Activated naive CD4-positive, alpha-beta T cell treated with anti-CD3 and anti-CD28 coated beads for 36 hours (primary cell): ENCODE measurements at regions of chr14 and their contacts with region 1.

Region 1: DNA sequence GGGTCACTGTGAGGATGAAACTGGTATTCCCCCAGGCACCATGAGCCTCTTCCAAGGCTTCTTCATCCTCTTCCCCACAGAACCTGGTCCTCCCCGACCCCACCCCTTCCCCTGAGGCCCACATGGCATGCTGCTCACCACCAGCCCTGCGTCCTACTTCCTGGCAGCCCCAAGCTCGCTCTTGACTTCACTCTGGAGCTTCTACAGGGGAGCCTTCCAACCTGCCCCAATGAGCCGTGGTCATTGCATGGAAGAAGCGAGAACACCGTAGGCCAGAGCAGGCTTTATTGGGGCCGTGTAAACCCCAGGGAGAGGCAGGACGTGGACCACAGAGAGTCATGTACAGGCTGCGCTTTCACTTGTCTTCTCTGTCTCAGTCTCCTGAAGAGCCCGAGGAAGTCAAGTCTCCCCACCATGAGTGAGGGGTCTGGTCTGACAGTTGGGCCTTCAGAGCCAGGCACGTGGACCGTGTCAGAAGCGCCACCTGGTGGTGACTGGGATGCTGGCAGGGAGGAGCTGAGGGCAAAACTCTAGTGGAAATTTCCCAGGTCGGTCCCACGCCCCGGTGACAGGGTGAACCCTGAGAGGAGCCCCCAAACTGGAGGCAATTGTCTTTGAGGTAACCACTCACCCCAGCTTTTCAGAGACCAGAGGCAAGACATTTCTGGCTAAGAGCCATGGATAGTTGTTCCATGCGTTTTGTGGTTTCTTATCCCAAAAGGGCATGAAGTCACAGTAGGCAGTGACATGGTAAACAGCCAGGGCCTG is 17.5 kb downstream of the RPS6KL1 start:
- DNase-seq: peak; percentile 87
- H3K4me3 Mint-ChIP-seq: no peak overlapping the region
- H3K27ac Mint-ChIP-seq: no peak overlapping the region
- H3K4me1 Mint-ChIP-seq: peaks cover 5% of the 10 kb centered on the region
- H3K27me3 Mint-ChIP-seq: no peaks in the 10 kb centered on the region

Region 2: DNA sequence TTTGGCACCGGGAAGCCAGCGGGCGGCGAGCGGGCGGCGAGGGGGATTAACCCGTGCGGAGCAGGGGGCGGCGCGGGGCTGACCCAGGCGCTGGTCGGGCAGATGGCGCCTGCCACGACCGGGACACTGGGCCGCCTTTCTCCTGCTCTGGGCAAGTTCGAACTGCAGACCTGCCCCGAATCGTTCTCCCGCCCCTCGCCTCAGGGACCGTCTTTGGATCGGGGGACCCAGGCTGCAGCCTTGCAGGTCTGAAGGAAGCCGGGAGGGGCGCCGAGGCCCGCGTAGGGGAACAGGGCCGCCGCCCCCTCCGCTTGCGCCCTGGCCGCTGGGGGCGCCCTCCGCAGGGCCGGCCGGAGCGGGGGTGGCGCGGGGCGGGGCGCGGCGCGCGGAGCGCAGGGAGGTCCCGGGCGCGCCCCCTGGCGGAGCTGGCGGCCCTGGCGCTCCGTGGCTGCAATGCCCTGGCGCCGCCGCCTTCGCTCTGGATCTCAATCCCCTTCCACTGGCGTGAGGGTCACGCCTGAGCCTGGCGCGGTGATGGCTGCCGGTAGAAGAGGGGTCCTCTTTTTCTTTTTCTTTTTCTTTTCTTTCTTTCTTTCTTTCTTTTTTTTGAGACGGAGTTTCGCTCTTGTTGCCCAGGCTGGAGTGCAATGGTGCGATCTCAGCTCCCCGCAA is 293.1 kb before region 1 on chr14:
- CTCF ChIA-PET with region 1: interaction called, 12 read pairs
- intact Hi-C with region 1: loop called (anchors 1 kb)
- DNase-seq: peak; percentile 77
- H3K4me3 Mint-ChIP-seq: peak overlapping the region; percentile 62
- H3K27ac Mint-ChIP-seq: no peak overlapping the region
- H3K4me1 Mint-ChIP-seq: peaks cover 40% of the 10 kb centered on the region
- H3K27me3 Mint-ChIP-seq: peaks cover 14% of the 10 kb centered on the region

Region 3: GRCh38 chr14:74867673-74868072 is 37.9 kb before region 1 on chr14:
- CTCF ChIA-PET with region 1: interaction called, 379 read pairs
- intact Hi-C with region 1: no loop called
- DNase-seq: peak; percentile 64
- H3K4me3 Mint-ChIP-seq: peak overlapping the region; percentile 7
- H3K27ac Mint-ChIP-seq: no peak overlapping the region
- H3K4me1 Mint-ChIP-seq: peaks cover 16% of the 10 kb centered on the region
- H3K27me3 Mint-ChIP-seq: no peaks in the 10 kb centered on the region

Region 4: GRCh38 chr14:74881431-74882361 is 23.9 kb before region 1 on chr14 and contains the start of gene DLST:
- CTCF ChIA-PET with region 1: interaction called, 45 read pairs
- intact Hi-C with region 1: loop called (anchors 1 kb)
- DNase-seq: peak; percentile 87
- H3K4me3 Mint-ChIP-seq: peak within 1 kb of the TSS; percentile 91
- H3K27ac Mint-ChIP-seq: peak within 1 kb of the TSS; percentile 94
- H3K4me1 Mint-ChIP-seq: peaks cover 63% of the 10 kb centered on the region
- H3K27me3 Mint-ChIP-seq: no peaks in the 10 kb centered on the region
- total RNA-seq, gene DLST: 126 to 132 TPM

Region 5: GRCh38 chr14:74922739-74923401 is 17.3 kb after region 1 on chr14 and contains the start of gene RPS6KL1:
- CTCF ChIA-PET with region 1: interaction called, 19 read pairs
- intact Hi-C with region 1: no loop called
- DNase-seq: peak; percentile 78
- H3K4me3 Mint-ChIP-seq: peak within 1 kb of the TSS; percentile 73
- H3K27ac Mint-ChIP-seq: no peak within 1 kb of the TSS
- H3K4me1 Mint-ChIP-seq: peaks cover 12% of the 10 kb centered on the region
- H3K27me3 Mint-ChIP-seq: no peaks in the 10 kb centered on the region
- total RNA-seq, gene RPS6KL1: 4.5 to 6.8 TPM

Region 6: GRCh38 chr14:75063407-75064213 is 158.1 kb after region 1 on chr14 and contains the start of gene ACYP1:
- CTCF ChIA-PET with region 1: interaction called, 10 read pairs
- intact Hi-C with region 1: no loop called
- DNase-seq: peak; percentile 96
- H3K4me3 Mint-ChIP-seq: peak within 1 kb of the TSS; percentile 99
- H3K27ac Mint-ChIP-seq: peak within 1 kb of the TSS; percentile 94
- H3K4me1 Mint-ChIP-seq: peaks cover 23% of the 10 kb centered on the region
- H3K27me3 Mint-ChIP-seq: no peaks in the 10 kb centered on the region
- total RNA-seq, gene ACYP1: 46.3 to 50.5 TPM

Region 7: GRCh38 chr14:75096959-75097358 is 191.4 kb after region 1 on chr14:
- CTCF ChIA-PET with region 1: no interaction called
- intact Hi-C with region 1: no loop called
- DNase-seq: no peak
- H3K4me3 Mint-ChIP-seq: no peak overlapping the region
- H3K27ac Mint-ChIP-seq: no peak overlapping the region
- H3K4me1 Mint-ChIP-seq: no peaks in the 10 kb centered on the region
- H3K27me3 Mint-ChIP-seq: no peaks in the 10 kb centered on the region